Naive thymus-derived CD4-positive, alpha-beta T cell (primary cell): ENCODE measurements at regions of chr19 and their contacts with region 1.

Region 1: DNA sequence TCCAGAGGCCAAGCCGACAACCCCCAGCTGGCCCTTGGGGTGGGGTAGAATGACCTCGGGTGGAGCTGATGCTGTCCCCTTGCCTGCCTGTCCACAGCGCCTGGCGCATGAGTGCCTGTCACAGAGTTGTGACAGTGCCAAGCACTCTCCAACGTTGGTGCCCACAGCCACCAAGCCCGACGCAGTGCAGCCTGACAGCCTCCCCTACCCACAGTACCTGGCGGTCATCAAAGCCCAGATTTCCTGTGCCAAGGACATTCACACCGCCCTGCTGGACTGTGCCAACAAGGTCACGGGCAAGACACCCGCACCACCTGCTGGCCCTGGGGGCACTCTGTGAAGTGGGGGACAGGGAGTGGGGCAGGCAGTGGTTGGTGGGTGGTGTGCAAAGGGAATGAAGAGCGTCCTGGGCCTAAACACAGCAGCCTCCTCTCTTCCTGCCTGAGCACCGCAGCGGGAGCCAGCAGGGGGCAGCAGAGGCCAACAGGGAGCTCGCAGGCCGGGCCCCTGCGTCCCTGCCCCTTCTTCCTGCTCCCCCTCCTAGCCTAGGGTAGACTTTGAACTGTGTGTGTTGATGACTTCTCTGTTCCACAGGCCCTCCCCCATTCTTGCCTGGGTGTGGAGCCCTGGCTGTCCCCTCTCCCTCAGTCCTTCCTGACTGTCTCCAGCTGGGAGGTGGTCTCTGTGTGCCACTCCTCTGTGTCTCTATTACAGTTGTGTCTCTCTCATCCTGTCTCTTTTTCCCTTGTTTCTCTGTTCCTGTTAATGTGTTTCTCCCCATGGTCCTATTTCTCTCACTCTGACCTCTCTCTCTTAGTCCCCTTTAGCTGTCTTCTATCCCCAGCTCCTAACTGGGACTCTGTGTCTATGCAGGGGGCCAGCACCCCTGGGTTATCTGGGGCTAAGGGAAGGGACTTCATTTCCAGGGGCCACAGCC is 6.5 kb downstream of the MED29 start:
- DNase-seq: peak; percentile 88 to 97 (median 93)
- ATAC-seq: peak; percentile 71
- H3K4me3 ChIP-seq: peak overlapping the region; percentile 57
- H3K4me3 Mint-ChIP-seq: peak overlapping the region in 9 of 10 donors; percentile 48 to 80 (median 74)
- H3K27ac ChIP-seq: peak overlapping the region; percentile 63
- H3K27ac Mint-ChIP-seq: peak overlapping the region; percentile 84 to 96 (median 93)
- H3K4me1 ChIP-seq: peaks cover 39 to 42% of the 10 kb centered on the region in 2 donors
- H3K4me1 Mint-ChIP-seq: peaks cover 27 to 68% (median 56%) of the 10 kb centered on the region in 7 donors
- H3K27me3 ChIP-seq: no peaks in the 10 kb centered on the region
- H3K27me3 Mint-ChIP-seq: no peaks in the 10 kb centered on the region

Region 2: DNA sequence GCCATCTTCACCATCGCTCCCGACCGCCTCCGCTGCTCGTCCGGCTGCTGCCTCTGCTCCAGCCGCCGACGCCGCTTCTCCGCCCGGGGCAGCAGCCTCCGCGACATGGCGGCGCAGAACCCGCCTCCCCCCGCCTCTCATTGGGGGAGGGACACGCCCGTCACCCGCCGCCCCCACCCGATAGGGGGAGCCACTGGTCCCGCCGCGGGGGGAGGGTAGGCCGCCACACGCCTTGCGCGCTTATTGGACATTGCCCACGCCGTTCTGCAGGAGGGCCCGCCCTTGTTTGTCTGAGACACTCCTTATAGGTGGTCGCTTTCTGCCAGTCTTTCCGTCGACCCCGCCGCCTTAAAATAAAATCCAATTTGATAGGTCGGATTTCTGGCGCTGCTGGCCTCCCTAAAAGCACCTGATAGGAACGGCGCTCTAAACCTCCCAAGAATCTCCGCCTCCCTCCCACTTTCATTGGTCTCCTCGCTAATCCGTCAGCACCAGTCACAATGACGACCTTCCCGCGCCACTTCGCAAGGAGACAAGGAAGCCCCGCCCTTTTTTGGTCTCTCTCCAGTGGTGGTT is 547.7 kb before region 1 on chr19 and contains the start of gene HNRNPL:
- CTCF ChIA-PET with region 1: no interaction called
- POLR2A ChIA-PET with region 1: no interaction called
- intact Hi-C with region 1: loop called in 1 of 2 experiments (anchors 2 kb)
- DNase-seq: peak; percentile 99 to 100 (median 100)
- ATAC-seq: peak; percentile 78
- H3K4me3 ChIP-seq: peak within 1 kb of the TSS; percentile 81
- H3K4me3 Mint-ChIP-seq: peak within 1 kb of the TSS; percentile 88 to 99 (median 96)
- H3K27ac ChIP-seq: peak within 1 kb of the TSS; percentile 96
- H3K27ac Mint-ChIP-seq: peak within 1 kb of the TSS; percentile 94 to 100 (median 99)
- H3K4me1 ChIP-seq: peaks cover 24 to 41% of the 10 kb centered on the region in 2 donors
- H3K4me1 Mint-ChIP-seq: peaks cover 30 to 67% (median 50%) of the 10 kb centered on the region in 7 donors
- H3K27me3 ChIP-seq: no peaks in the 10 kb centered on the region
- H3K27me3 Mint-ChIP-seq: peaks cover 0 to 5% (median 0%) of the 10 kb centered on the region in 5 donors
- total RNA-seq, gene HNRNPL: 339 to 539 (median 505) TPM

Region 3: GRCh38 chr19:39335168-39335548 is 62.5 kb before region 1 on chr19:
- CTCF ChIA-PET with region 1: interaction called, 3 read pairs
- POLR2A ChIA-PET with region 1: interaction called, 14 read pairs
- intact Hi-C with region 1: no loop called
- DNase-seq: peak in 5 of 9 donors; percentile 24 to 50 (median 40)
- ATAC-seq: peak; percentile 44
- H3K4me3 ChIP-seq: peak overlapping the region; percentile 97
- H3K4me3 Mint-ChIP-seq: peak overlapping the region; percentile 98 to 100 (median 100)
- H3K27ac ChIP-seq: peak overlapping the region; percentile 94
- H3K27ac Mint-ChIP-seq: peak overlapping the region; percentile 94 to 100 (median 99)
- H3K4me1 ChIP-seq: peaks cover 29 to 58% of the 10 kb centered on the region in 2 donors
- H3K4me1 Mint-ChIP-seq: peaks cover 49 to 80% (median 56%) of the 10 kb centered on the region in 7 donors
- H3K27me3 ChIP-seq: no peaks in the 10 kb centered on the region
- H3K27me3 Mint-ChIP-seq: no peaks in the 10 kb centered on the region

Region 4: DNA sequence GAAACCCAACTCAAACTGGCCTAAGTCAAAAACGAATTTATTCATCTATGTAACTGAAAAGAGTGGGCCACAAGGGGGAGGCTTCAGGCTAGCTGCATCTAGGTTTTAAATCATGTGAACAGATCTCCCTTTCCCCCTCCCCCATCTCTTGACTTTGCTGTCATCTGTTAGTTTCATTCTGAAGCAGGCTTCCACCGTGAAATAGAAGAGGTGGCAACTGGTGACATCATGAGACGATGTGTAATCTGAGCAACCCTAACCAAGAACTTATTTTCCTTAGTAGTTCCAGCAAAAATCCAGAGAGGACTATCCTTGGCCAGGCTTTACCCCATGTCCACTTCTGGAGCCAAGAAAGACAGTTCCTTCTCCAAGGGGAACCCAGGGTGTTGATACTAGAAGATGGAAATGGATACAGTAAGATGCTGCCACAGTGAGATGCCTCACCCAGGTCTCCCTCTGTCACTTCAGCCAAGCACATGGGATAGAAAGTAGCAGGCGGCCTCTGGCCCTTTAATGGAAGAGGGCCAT is 46.0 kb before region 1 on chr19:
- CTCF ChIA-PET with region 1: no interaction called
- POLR2A ChIA-PET with region 1: no interaction called
- intact Hi-C with region 1: no loop called
- DNase-seq: peak in 4 of 9 donors; percentile 15 to 40 (median 25)
- ATAC-seq: peak; percentile 77
- H3K4me3 ChIP-seq: no peak overlapping the region
- H3K4me3 Mint-ChIP-seq: peak overlapping the region in 1 of 10 donors; percentile 24
- H3K27ac ChIP-seq: no peak overlapping the region
- H3K27ac Mint-ChIP-seq: peak overlapping the region in 2 of 9 donors; percentile 16 to 82
- H3K4me1 ChIP-seq: no peaks in the 10 kb centered on the region
- H3K4me1 Mint-ChIP-seq: peaks cover 22 to 50% (median 34%) of the 10 kb centered on the region in 7 donors
- H3K27me3 ChIP-seq: no peaks in the 10 kb centered on the region
- H3K27me3 Mint-ChIP-seq: no peaks in the 10 kb centered on the region

Region 5: GRCh38 chr19:39381910-39382611 is 15.6 kb before region 1 on chr19:
- CTCF ChIA-PET with region 1: no interaction called
- POLR2A ChIA-PET with region 1: no interaction called
- intact Hi-C with region 1: no loop called
- DNase-seq: no peak
- ATAC-seq: no peak
- H3K4me3 ChIP-seq: no peak overlapping the region
- H3K4me3 Mint-ChIP-seq: no peak overlapping the region
- H3K27ac ChIP-seq: no peak overlapping the region
- H3K27ac Mint-ChIP-seq: peak overlapping the region in 3 of 9 donors; percentile 18 to 70 (median 65)
- H3K4me1 ChIP-seq: no peaks in the 10 kb centered on the region
- H3K4me1 Mint-ChIP-seq: peaks cover 0 to 4% (median 0%) of the 10 kb centered on the region in 7 donors
- H3K27me3 ChIP-seq: no peaks in the 10 kb centered on the region
- H3K27me3 Mint-ChIP-seq: no peaks in the 10 kb centered on the region

Region 6: DNA sequence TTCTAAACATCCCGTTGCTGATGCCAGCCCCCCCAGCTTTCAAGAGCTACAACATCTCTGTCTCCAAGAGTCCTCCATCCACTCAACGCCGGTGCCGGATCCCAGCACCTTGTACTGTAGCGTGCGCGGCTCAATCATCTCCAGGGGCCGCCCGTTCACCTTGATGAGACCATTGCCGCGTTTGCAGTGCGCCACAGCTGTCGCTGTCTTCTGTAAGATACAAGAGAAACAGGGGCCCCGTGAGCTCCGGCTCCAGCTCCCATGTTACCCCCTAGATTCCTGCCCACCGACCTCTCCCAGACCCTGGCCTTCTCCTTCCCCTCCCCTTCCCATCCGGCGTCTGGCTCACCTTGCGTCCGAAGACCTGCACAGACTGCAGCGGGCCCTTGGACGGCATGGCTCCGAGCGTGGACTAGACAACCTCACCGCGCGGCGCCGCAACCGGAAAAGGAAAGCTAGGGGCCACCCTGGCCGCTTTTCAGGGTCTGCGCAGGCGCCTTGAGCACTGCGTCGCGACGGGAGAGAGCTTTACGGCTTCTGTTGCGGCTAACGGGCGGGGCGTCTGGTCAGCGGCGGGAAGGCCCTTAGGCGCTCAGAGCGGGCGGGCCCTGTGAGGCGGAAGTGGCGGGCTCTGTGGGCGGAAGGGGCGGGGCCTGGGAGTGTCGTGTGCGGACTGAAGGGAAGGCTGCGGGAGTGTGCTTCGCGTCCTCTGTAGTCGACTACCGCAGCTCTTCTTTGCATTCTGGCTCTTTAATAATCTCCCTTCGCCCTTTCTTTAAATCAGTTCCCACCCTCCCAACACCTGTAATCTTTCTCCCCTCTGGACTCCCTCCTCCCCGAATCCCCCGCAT is 38.1 kb after region 1 on chr19 and contains the start of gene RPS16:
- CTCF ChIA-PET with region 1: interaction called, 9 read pairs
- POLR2A ChIA-PET with region 1: interaction called, 92 read pairs
- intact Hi-C with region 1: loop called in 1 of 2 experiments (anchors 1 kb)
- DNase-seq: peak; percentile 93 to 100 (median 98)
- ATAC-seq: peak; percentile 98
- H3K4me3 ChIP-seq: peak within 1 kb of the TSS; percentile 98
- H3K4me3 Mint-ChIP-seq: peak within 1 kb of the TSS; percentile 92 to 100 (median 98)
- H3K27ac ChIP-seq: peak within 1 kb of the TSS; percentile 97
- H3K27ac Mint-ChIP-seq: peak within 1 kb of the TSS; percentile 95 to 100 (median 99)
- H3K4me1 ChIP-seq: peaks cover 27% of the 10 kb centered on the region in 2 donors
- H3K4me1 Mint-ChIP-seq: peaks cover 20 to 53% (median 40%) of the 10 kb centered on the region in 7 donors
- H3K27me3 ChIP-seq: no peaks in the 10 kb centered on the region
- H3K27me3 Mint-ChIP-seq: peaks cover 0 to 5% (median 0%) of the 10 kb centered on the region in 5 donors
- total RNA-seq, gene RPS16: 2,281 to 4,335 (median 4,063) TPM